Activated CD8-positive, alpha-beta memory T cell treated with anti-CD3 and anti-CD28 coated beads, Interleukin-2, amount 10 ng/mL, durations not matched to agents 7 days and 5 days (primary cell): ENCODE measurements at regions of chr3 and their contacts with region 1.

Region 1: GRCh38 chr3:152071924-152072323 is 196.8 kb upstream of the MBNL1 start:
- DNase-seq: no peak
- ATAC-seq: peak; percentile 58
- H3K4me3 Mint-ChIP-seq: no peak overlapping the region
- H3K27ac Mint-ChIP-seq: no peak overlapping the region
- H3K4me1 Mint-ChIP-seq: peaks cover 6% of the 10 kb centered on the region
- H3K27me3 Mint-ChIP-seq: no peaks in the 10 kb centered on the region

Region 2: DNA sequence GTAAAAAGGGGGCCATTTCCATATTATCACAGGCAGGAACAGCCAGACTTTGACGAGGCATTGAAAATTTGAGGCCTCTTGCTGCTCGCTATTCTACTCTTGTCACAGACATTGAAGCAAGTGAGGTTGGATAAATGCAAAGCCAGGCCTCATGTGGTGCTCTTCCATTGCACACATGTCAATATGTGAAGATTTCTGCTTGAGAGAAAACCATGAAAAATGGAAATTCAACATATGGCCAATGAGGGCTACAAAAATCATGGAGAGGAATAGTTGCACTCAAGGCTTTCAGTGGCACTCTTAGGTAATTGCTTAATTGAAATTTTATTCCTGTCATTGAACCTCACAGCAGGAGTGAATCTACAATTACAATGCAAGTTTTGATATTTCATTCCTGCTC is 11.2 kb after region 1 on chr3:
- CTCF ChIA-PET with region 1: interaction called, 11 read pairs
- DNase-seq: no peak
- ATAC-seq: no peak
- H3K4me3 Mint-ChIP-seq: no peak overlapping the region
- H3K27ac Mint-ChIP-seq: no peak overlapping the region
- H3K4me1 Mint-ChIP-seq: no peaks in the 10 kb centered on the region
- H3K27me3 Mint-ChIP-seq: no peaks in the 10 kb centered on the region

Region 3: DNA sequence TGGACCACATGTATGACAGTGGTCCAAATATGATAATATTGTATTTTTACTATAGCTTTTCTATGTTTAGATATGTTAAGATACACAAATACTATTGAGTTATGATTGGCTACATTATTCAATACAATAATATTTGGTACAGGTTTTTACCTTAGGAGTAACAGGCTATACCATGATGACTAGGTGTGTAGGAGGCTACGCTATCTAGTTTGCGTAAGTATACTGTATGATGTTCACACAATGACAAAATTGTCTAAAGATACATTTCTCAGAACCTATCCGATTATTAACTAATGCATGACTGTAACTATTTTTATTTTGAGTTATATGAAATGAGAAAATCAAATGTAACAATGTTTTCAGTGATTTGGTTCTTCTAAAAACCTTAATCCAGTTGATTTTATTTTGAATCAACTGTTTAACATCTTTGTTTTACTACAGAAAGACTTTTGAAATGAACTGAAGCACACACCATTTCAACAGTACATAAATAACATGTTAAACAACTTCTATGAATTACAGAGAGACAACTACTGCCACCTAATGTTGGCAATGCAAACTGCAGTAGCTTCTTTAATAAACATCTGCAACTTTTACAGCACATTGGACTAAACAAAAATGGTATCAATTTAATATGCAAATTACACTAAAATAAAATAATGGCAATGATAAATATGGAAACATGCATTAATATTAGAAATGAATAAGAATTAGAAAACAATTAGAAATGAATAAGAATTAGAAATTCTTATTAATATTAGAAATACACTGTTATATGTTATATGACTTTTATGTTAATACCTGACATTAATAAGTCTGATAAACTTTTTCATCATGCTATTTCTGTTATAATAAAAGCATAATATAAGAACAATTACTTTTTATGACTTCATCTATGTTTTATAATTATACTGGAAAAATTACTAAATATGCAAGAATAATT is 452.5 kb after region 1 on chr3:
- CTCF ChIA-PET with region 1: interaction called, 15 read pairs
- DNase-seq: peak; percentile 60
- ATAC-seq: no peak
- H3K4me3 Mint-ChIP-seq: no peak overlapping the region
- H3K27ac Mint-ChIP-seq: no peak overlapping the region
- H3K4me1 Mint-ChIP-seq: no peaks in the 10 kb centered on the region
- H3K27me3 Mint-ChIP-seq: peaks cover 3% of the 10 kb centered on the region